A549 (cell line): ENCODE measurements at regions of chr9 and their contacts with region 1.

Region 1: GRCh38 chr9:76393963-76394679 is at the start of gene RFK:
- DNase-seq: peak; percentile 74 to 96
- ATAC-seq: peak; percentile 91 to 92
- H3K4me3 ChIP-seq: peak within 1 kb of the TSS; percentile 87
- H3K27ac ChIP-seq: peak within 1 kb of the TSS; percentile 98
- H3K4me1 ChIP-seq: peaks cover 32% of the 10 kb centered on the region
- CTCF ChIP-seq: peak; percentile 48
- EP300 ChIP-seq: no peak; a peak in 1 of 5 replicates
- POLR2A ChIP-seq: peak; percentile 55
- RAD21 ChIP-seq: peak; percentile 33 to 71
- polyA plus RNA-seq, gene RFK: 130 and 184 TPM in 2 replicates

Region 2: GRCh38 chr9:75890472-75891276 is 503.4 kb before region 1 on chr9 and contains the start of gene PCSK5:
- CTCF ChIA-PET with region 1: no interaction called
- POLR2A ChIA-PET with region 1: interaction called, 11 read pairs
- DNase-seq: peak; percentile 77 to 90
- ATAC-seq: peak; percentile 88 to 91
- H3K4me3 ChIP-seq: peak within 1 kb of the TSS; percentile 51
- H3K27ac ChIP-seq: peak within 1 kb of the TSS; percentile 61 to 84
- H3K4me1 ChIP-seq: peaks cover 21% of the 10 kb centered on the region; the same call in 2 of the 3 replicates
- CTCF ChIP-seq: peak; percentile 15; the same call in 1 of the 3 replicates
- EP300 ChIP-seq: no peak
- POLR2A ChIP-seq: peak; percentile 92
- RAD21 ChIP-seq: no peak; a peak in 2 of 5 replicates
- polyA plus RNA-seq, gene PCSK5: 6.7 and 7.0 TPM in 2 replicates

Region 3: DNA sequence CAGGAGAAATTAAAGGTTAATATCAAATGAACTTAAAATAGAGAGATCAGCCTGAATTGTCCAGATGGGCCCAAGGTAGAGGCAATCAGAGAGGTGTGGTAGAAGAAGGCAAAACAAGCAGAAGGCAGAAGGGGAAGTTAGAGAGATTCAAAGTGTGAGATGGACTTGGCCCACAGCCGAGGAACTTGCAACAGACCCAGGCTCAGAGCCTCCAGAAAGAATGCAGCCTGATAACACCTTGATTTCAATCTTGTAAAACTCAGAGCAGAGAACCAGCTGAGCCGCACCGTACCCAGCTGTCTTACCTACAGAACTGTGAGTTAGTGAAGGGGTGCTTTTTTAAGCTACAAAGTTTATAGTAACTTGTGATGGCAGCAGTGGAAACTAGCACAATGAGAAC is 190.7 kb before region 1 on chr9:
- CTCF ChIA-PET with region 1: no interaction called
- POLR2A ChIA-PET with region 1: no interaction called
- DNase-seq: no peak
- ATAC-seq: no peak
- H3K4me3 ChIP-seq: no peak overlapping the region
- H3K27ac ChIP-seq: no peak overlapping the region
- H3K4me1 ChIP-seq: no peaks in the 10 kb centered on the region
- CTCF ChIP-seq: no peak
- EP300 ChIP-seq: no peak
- POLR2A ChIP-seq: no peak
- RAD21 ChIP-seq: no peak

Region 4: GRCh38 chr9:76302947-76303940 is 90.9 kb before region 1 on chr9:
- CTCF ChIA-PET with region 1: interaction called, 18 read pairs
- POLR2A ChIA-PET with region 1: interaction called, 4 read pairs
- DNase-seq: peak; percentile 48 to 70
- ATAC-seq: peak; percentile 24 to 79; a peak in 3 of 6 replicates
- H3K4me3 ChIP-seq: no peak overlapping the region
- H3K27ac ChIP-seq: 0 out of 6 replicates have a peak overlapping the region, but pooled peaks of 1 of the 2 experiments have one; percentile 62
- H3K4me1 ChIP-seq: no peaks in the 10 kb centered on the region
- CTCF ChIP-seq: peak; percentile 81
- EP300 ChIP-seq: no peak
- POLR2A ChIP-seq: no peak
- RAD21 ChIP-seq: peak; percentile 86 to 88

Region 5: GRCh38 chr9:76321205-76321828 is 72.8 kb before region 1 on chr9:
- CTCF ChIA-PET with region 1: interaction called, 3 read pairs
- POLR2A ChIA-PET with region 1: interaction called, 20 read pairs
- DNase-seq: peak; percentile 44 to 64
- ATAC-seq: peak; percentile 86 to 93
- H3K4me3 ChIP-seq: no peak overlapping the region
- H3K27ac ChIP-seq: peak overlapping the region; percentile 44 to 75; a peak in 4 of 6 replicates
- H3K4me1 ChIP-seq: peaks cover 23% of the 10 kb centered on the region
- CTCF ChIP-seq: no peak
- EP300 ChIP-seq: no peak
- POLR2A ChIP-seq: no peak
- RAD21 ChIP-seq: no peak

Region 6: GRCh38 chr9:76369583-76369982 is 24.5 kb before region 1 on chr9:
- CTCF ChIA-PET with region 1: interaction called, 53 read pairs
- POLR2A ChIA-PET with region 1: interaction called, 102 read pairs
- DNase-seq: no peak
- ATAC-seq: no peak
- H3K4me3 ChIP-seq: no peak overlapping the region
- H3K27ac ChIP-seq: peak overlapping the region; percentile 80 to 95
- H3K4me1 ChIP-seq: peaks cover 75% of the 10 kb centered on the region
- CTCF ChIP-seq: no peak
- EP300 ChIP-seq: no peak
- POLR2A ChIP-seq: no peak
- RAD21 ChIP-seq: no peak

Region 7: GRCh38 chr9:76374702-76375559 is 19.2 kb before region 1 on chr9:
- CTCF ChIA-PET with region 1: interaction called, 53 read pairs
- POLR2A ChIA-PET with region 1: interaction called, 102 read pairs
- DNase-seq: peak; percentile 94 to 99
- ATAC-seq: peak; percentile 88 to 90
- H3K4me3 ChIP-seq: peak overlapping the region; percentile 3; the same call in 1 of the 3 replicates
- H3K27ac ChIP-seq: peak overlapping the region; percentile 89 to 95
- H3K4me1 ChIP-seq: peaks cover 94% of the 10 kb centered on the region
- CTCF ChIP-seq: no peak
- EP300 ChIP-seq: peak; percentile 92 to 96
- POLR2A ChIP-seq: no peak
- RAD21 ChIP-seq: peak; percentile 6 to 44; a peak in 2 of 5 replicates

Region 8: DNA sequence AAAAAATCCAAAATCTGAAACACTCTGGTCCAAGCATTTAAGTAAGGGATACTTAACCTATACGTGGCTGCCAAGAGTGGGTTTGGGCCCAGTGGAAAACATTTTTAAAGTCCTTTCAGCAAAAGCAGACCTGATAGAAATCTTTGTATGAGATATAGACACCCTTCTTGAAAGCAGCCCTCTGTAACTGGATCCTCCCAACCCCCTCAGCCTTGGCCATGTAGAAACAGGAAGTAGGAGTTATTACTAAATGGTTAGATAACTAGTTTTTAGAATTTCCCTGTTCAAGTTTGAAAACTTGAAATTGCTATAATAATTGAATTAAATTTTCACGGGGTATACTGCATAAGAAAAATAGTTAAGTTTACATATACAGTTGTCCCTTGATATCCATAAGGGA is 258.8 kb after region 1 on chr9:
- CTCF ChIA-PET with region 1: no interaction called
- POLR2A ChIA-PET with region 1: no interaction called
- DNase-seq: no peak
- ATAC-seq: no peak
- H3K4me3 ChIP-seq: no peak overlapping the region
- H3K27ac ChIP-seq: no peak overlapping the region
- H3K4me1 ChIP-seq: no peaks in the 10 kb centered on the region
- CTCF ChIP-seq: no peak
- EP300 ChIP-seq: no peak
- POLR2A ChIP-seq: no peak
- RAD21 ChIP-seq: no peak